Activated CD4-positive, alpha-beta T cell treated with anti-CD3 and anti-CD28 coated beads for 36 hours (primary cell): ENCODE measurements at regions of chr2 and their contacts with region 1.

Region 1: DNA sequence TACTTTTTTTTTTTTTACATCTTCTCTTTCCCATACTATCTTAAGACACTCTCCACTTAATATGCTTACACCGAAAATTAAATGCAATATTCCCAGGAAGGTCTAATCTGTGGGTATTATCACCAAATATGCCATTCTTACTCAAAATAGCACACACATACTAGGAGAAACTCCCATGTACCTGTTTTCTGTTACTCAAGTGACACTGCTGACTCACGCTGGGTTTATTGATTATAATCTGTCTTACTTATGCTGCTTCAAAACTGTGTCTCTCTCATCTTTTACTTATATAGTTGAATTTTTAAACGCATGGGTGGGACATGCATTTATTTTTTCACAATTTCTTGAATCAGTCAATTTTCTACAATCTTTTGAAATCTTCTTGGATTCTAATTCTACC is 29.9 kb downstream of the MRPL19 start:
- DNase-seq: no peak
- ATAC-seq: no peak
- H3K4me3 Mint-ChIP-seq: no peak overlapping the region
- H3K27ac Mint-ChIP-seq: no peak overlapping the region
- H3K4me1 Mint-ChIP-seq: peaks cover 11% of the 10 kb centered on the region
- H3K27me3 Mint-ChIP-seq: no peaks in the 10 kb centered on the region

Region 2: DNA sequence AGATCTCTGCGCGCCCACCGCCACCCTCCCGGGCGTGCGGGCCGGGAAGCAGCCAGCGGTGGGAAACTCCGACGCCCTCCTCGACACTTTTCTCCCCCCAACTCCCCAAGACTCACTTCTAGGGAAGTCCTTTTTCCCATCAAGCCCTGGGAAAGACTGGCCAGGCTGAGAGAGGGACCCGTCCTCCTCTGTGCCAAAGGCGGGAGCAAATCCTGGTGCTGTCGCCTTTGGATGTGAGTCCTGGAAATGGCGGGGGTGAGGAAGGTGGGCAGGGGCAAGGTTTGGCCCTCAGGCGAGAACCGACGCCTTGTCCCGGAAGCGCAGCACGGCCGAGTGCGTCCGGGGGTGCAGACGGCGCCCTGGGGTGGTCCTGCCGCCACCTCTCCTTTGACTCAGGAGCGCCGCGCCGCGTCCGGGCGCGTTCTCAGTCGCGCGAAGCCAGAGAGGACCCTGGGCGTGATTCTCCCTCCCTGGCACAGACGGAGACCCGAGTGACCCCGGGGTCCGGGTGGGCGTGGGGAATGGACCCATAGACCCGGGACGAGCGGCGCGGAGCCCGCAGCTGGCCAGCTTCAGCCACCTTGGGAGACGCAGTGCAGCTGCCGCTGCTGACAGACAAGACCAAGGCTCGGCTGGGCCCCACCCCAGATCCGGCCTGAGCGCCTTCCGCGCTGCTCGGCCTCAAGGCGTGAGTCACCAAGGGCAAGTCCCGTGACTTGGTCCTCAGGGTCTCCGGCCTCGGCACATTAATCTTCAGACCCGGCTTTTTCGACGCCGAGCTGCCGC is 1173.6 kb before region 1 on chr2:
- CTCF ChIA-PET with region 1: no interaction called
- POLR2A ChIA-PET with region 1: no interaction called
- intact Hi-C with region 1: no loop called
- DNase-seq: peak; percentile 71
- ATAC-seq: no peak
- H3K4me3 Mint-ChIP-seq: peak overlapping the region; percentile 63
- H3K27ac Mint-ChIP-seq: no peak overlapping the region
- H3K4me1 Mint-ChIP-seq: peaks cover 45% of the 10 kb centered on the region
- H3K27me3 Mint-ChIP-seq: peaks cover 55% of the 10 kb centered on the region

Region 3: GRCh38 chr2:75646583-75647425 is 29.7 kb before region 1 on chr2 and contains the start of gene MRPL19:
- CTCF ChIA-PET with region 1: interaction called, 11 read pairs
- POLR2A ChIA-PET with region 1: no interaction called
- intact Hi-C with region 1: no loop called
- DNase-seq: peak; percentile 86
- ATAC-seq: peak; percentile 99
- H3K4me3 Mint-ChIP-seq: peak within 1 kb of the TSS; percentile 88
- H3K27ac Mint-ChIP-seq: peak within 1 kb of the TSS; percentile 96
- H3K4me1 Mint-ChIP-seq: peaks cover 32% of the 10 kb centered on the region
- H3K27me3 Mint-ChIP-seq: no peaks in the 10 kb centered on the region
- total RNA-seq, gene MRPL19: 45.2 to 72.4 TPM

Region 4: GRCh38 chr2:75688196-75688595 is 11.7 kb after region 1 on chr2:
- CTCF ChIA-PET with region 1: interaction called, 19 read pairs
- POLR2A ChIA-PET with region 1: no interaction called
- intact Hi-C with region 1: no loop called
- DNase-seq: no peak
- ATAC-seq: no peak
- H3K4me3 Mint-ChIP-seq: no peak overlapping the region
- H3K27ac Mint-ChIP-seq: no peak overlapping the region
- H3K4me1 Mint-ChIP-seq: peaks cover 5% of the 10 kb centered on the region
- H3K27me3 Mint-ChIP-seq: no peaks in the 10 kb centered on the region

Region 5: DNA sequence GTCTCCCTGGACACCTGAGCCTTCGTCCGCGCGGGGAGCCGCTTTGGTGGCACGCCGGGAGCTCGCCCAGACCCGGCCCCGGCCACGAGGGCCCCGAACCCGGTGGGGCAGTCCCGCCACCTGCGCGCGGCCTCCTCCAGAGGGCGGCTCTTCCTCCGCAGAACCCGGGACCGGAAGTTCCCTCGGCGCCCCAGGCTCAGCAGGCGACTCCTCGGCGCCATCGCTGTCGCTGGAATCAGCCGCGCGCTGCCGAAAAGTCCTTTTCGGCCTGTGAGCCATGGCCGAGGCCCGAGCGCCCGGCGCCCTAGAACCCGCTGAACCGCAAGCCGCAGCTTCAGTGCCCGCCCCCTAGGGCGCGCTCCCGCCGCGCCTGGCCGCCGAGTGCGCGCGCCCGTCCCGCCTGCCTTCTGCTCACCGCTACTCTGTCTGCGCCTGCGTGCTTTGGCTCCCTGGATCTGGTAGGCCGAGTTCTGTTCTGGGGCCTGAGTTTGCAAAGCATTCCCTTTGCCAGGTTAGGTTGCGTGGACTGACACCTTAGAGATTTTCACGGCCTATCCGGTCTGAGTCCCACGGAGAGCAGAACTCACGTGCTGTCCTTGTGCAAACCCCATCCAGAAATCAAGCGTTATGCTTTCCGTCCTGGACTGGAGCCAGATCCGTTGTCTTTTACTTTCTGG is 34.3 kb after region 1 on chr2 and contains the start of gene GCFC2:
- CTCF ChIA-PET with region 1: interaction called, 10 read pairs
- POLR2A ChIA-PET with region 1: no interaction called
- intact Hi-C with region 1: no loop called
- DNase-seq: peak; percentile 90
- ATAC-seq: peak; percentile 95
- H3K4me3 Mint-ChIP-seq: peak within 1 kb of the TSS; percentile 73
- H3K27ac Mint-ChIP-seq: peak within 1 kb of the TSS; percentile 98
- H3K4me1 Mint-ChIP-seq: peaks cover 26% of the 10 kb centered on the region
- H3K27me3 Mint-ChIP-seq: peaks cover 2% of the 10 kb centered on the region
- total RNA-seq, gene GCFC2: 37.6 to 41.1 TPM